ENCODE measurements at regions of chr11 and their contacts with region 1.

Region 1: GRCh38 chr11:70352601-70353000 is 45.7 kb upstream of the CTTN start:
- DNase-seq: no peak
- H3K4me3 ChIP-seq: no peak overlapping the region
- H3K27ac ChIP-seq: no peak overlapping the region
- H3K4me1 ChIP-seq: no peaks in the 10 kb centered on the region
- H3K27me3 ChIP-seq: no peaks in the 10 kb centered on the region
- CTCF ChIP-seq: no peak
- POLR2A ChIP-seq: no peak

Region 2: GRCh38 chr11:70364745-70365543 is 12.3 kb after region 1 on chr11:
- intact Hi-C with region 1: loop called (anchors 1 kb)
- DNase-seq: peak in 1 of 2 donors; percentile 2
- H3K4me3 ChIP-seq: no peak overlapping the region
- H3K27ac ChIP-seq: no peak overlapping the region
- H3K4me1 ChIP-seq: no peaks in the 10 kb centered on the region
- H3K27me3 ChIP-seq: no peaks in the 10 kb centered on the region
- CTCF ChIP-seq: no peak
- POLR2A ChIP-seq: no peak

Region 3: DNA sequence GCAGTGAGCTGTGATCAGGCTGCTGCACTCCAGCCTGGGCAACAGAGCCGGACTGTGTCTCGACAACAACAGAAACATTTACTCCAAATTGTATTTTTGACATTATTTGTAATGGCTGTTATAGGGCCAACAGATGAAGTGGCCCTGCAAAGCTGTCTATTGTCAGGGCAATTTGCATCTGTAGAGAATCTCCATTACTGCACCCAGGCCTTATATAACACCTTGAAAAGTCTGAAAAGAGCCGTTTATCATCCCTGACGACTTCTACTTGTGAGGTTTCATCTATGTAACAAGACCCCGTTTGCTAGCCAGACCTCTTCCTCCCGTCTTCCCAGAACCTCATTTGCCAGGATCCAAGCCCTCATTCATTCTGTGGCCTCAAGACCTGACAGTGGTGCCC is 36.6 kb after region 1 on chr11:
- intact Hi-C with region 1: loop called (anchors 2 kb)
- DNase-seq: peak in 1 of 2 donors; percentile 3
- H3K4me3 ChIP-seq: no peak overlapping the region
- H3K27ac ChIP-seq: no peak overlapping the region
- H3K4me1 ChIP-seq: no peaks in the 10 kb centered on the region
- H3K27me3 ChIP-seq: no peaks in the 10 kb centered on the region
- CTCF ChIP-seq: no peak
- POLR2A ChIP-seq: no peak